Mammary epithelial cell (primary cell): ENCODE measurements at regions of chr10 and their contacts with region 1.

Region 1: DNA sequence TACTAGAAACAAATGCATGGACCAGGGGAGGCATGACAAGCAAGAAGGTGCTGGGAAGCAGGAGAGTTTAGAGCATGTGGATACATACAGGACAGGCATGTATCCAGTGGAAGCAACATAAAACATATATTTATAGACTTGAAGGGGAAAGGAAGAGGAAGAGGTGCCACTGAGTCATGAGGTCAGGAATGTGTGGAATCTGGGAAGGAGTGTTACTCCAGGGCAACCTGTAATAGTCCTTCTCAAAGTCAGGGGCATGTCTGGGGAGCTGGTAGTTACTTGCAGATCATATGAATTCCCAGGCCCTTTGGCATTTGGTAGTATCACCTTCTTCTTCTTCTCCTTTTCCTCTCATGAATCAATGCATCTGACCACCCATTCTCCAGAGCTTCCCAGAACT is 246.6 kb downstream of the XPNPEP1 start:
- DNase-seq: peak; percentile 28
- H3K4me3 ChIP-seq: no peak overlapping the region
- H3K27ac ChIP-seq: no peak overlapping the region
- H3K4me1 ChIP-seq: peaks cover 18% of the 10 kb centered on the region
- H3K27me3 ChIP-seq: no peaks in the 10 kb centered on the region
- CTCF ChIP-seq: no peak

Region 2: DNA sequence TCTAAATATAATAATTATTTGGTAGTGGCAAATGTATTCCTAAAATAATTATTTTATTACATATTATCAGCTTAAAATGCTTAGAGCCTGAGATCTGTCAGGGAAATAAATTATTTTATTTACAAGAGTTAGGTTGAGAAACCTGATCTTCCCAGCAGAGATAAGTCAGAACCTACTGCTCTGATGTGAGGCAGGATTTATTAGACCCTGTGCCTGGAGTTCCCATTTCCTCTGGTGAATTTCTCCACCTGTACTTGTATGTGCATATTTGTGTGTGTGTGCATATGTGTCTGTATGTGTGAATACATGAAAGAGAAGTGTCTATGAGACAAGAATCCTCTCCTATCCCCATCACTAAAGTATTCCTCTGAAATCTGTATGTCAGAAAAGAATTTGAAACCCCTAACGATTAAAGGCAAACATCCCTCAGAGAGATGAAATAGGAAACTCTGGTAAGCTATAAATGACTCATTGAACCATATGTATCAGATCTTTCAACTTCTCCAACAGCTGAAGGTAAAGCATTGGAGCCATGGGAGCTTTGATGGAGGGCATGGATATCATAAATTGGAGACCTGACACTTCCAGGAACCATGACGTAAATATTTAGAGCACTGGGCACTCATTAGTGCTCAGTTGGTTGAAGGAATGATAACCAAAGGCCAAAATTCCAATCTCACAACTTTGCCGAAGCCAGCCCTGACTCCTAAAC is 55.7 kb after region 1 on chr10:
- CTCF ChIA-PET with region 1: no interaction called
- dilution Hi-C with region 1: no loop called
- in situ Hi-C with region 1: no loop called
- intact Hi-C with region 1: loop called (anchors 5 kb)
- DNase-seq: no peak
- H3K4me3 ChIP-seq: no peak overlapping the region
- H3K27ac ChIP-seq: no peak overlapping the region
- H3K4me1 ChIP-seq: no peaks in the 10 kb centered on the region
- H3K27me3 ChIP-seq: no peaks in the 10 kb centered on the region
- CTCF ChIP-seq: no peak

Region 3: GRCh38 chr10:109934958-109935706 is 258.4 kb after region 1 on chr10:
- CTCF ChIA-PET with region 1: no interaction called
- dilution Hi-C with region 1: no loop called
- in situ Hi-C with region 1: no loop called
- intact Hi-C with region 1: no loop called
- DNase-seq: peak; percentile 56
- H3K4me3 ChIP-seq: no peak overlapping the region
- H3K27ac ChIP-seq: no peak overlapping the region
- H3K4me1 ChIP-seq: peaks cover 11% of the 10 kb centered on the region
- H3K27me3 ChIP-seq: no peaks in the 10 kb centered on the region
- CTCF ChIP-seq: no peak